Adrenal gland (tissue), 19 donors: ENCODE measurements at regions of chr18 and their contacts with region 1.

Region 1: DNA sequence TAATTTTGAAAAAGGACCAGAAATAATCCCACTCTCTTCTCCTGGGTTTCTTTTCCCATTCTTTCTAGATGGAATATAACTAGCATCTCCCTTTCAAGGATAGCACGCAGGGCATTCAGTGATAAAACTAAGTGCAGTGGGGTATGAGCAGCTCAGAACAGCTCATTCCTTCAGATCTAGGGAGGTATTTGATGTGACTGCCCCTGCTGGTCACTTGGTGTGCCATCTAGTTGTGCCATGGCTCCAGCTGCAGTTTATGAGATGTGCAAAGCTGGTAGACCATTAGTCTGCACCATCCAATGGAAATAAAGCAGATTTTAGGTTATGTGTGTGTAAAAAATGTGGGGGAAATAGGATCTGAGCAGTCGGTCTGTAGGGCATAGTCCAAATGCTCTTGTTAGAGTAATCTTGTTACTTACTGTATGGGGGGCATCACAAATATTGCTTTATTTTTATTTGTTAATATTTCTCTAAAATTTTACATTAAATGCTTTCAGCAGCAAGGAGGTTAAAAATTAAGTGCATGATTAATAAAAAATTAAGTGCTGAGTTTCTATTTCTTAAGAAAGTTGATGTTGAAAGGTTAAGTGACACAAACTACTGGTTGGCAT is 38.9 kb downstream of the CTAGE1 start:
- DNase-seq: peak; percentile 40 to 83 (median 72)
- H3K4me3 ChIP-seq: no peak overlapping the region
- H3K27ac ChIP-seq: no peak overlapping the region
- H3K4me1 ChIP-seq: no peaks in the 10 kb centered on the region
- H3K27me3 ChIP-seq: no peaks in the 10 kb centered on the region
- CTCF ChIP-seq: peak; percentile 43 to 72 (median 60)
- POLR2A ChIP-seq: no peak

Region 2: GRCh38 chr18:22471546-22472131 is 92.9 kb after region 1 on chr18:
- intact Hi-C with region 1: loop called in 1 of 2 experiments (anchors 10 kb)
- DNase-seq: peak; percentile 78 to 94 (median 93)
- H3K4me3 ChIP-seq: no peak overlapping the region
- H3K27ac ChIP-seq: peak overlapping the region; percentile 47 to 91 (median 81)
- H3K4me1 ChIP-seq: peaks cover 19 to 35% of the 10 kb centered on the region in 2 donors
- H3K27me3 ChIP-seq: no peaks in the 10 kb centered on the region
- CTCF ChIP-seq: no peak
- POLR2A ChIP-seq: peak in 1 of 2 donors; percentile 45